Sciatic nerve (tissue), 2 donors: ENCODE measurements at regions of chr19 and their contacts with region 1.

Region 1: GRCh38 chr19:7340959-7341837 is 7.5 kb upstream of the ARHGEF18 start:
- DNase-seq: peak; percentile 91
- ATAC-seq: peak; percentile 60

Region 2: DNA sequence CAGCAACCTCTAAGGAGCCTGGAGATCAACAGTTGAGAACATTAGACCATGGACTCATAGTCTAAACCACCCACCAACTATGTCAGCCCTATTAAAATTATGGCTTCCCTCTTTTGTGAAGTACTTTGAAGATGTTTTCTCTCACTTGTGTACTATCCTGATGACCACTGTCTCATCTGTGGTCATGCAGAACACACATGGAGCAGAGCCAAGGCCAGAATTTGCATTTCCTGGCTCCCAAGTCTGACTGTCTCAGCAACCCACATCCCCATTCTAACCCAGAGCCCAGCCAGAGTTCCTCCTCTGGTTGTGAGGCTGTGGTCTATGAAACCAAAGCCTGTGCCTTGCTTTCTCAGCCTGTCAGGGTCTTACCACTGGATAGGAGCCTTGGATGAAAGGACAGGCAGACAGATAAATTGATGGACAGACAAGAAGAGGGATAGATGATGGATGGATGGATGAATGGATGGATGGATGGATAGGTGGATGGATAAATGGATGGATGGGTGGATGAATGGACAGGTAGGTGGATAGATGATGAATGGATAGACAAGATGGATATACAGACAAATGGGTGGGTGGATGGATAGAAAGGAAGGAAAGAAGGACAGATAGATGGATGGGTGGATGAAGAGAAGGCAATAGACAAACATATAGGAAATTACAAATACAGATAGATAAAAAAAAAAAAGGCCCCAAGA is 236.3 kb before region 1 on chr19:
- intact Hi-C with region 1: loop called (anchors 5 kb)
- DNase-seq: no peak
- ATAC-seq: no peak